WTC11 (cell line): ENCODE measurements at regions of chr12 and their contacts with region 1.

Region 1: DNA sequence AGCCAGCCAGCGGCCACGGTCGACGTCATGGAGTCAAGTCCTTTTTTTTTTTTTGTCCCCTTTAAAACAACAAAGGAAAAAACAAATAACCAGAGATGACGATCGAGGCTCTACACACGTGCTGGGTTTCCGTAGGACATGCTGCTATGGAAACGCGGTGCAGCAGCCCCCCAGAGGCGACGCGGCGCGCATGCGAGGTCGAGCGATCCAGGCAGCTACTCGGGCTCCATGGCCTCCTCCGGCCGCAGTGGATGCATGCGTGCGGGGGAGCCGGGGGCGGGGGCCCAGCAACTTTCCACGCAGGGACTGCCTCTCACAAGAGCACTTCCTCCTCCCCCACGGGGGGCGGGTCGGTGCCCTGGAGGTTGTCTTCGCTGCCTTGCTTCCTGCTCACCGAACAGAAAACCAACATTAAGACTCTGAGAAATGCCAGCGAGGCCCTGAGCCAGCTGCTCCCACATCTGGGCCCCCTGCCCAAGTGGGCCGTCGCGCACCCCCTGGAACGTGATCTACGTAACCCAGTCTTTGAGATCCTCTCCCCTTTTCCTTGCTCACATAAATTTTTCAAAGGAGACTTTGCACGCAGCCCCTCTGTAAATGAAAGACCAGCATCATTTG is 30.7 kb downstream of the P2RX4 start:
- DNase-seq: peak; percentile 50
- ATAC-seq: peak; percentile 33
- H3K4me3 Mint-ChIP-seq: no peak overlapping the region
- H3K27ac Mint-ChIP-seq: 0 out of 2 replicates have a peak overlapping the region, but pooled peaks have one; percentile 29
- H3K4me1 Mint-ChIP-seq: peaks cover 39% of the 10 kb centered on the region
- H3K27me3 Mint-ChIP-seq: no peaks in the 10 kb centered on the region
- CTCF ChIP-seq: no peak

Region 2: GRCh38 chr12:121124402-121125098 is 116.0 kb before region 1 on chr12:
- CTCF ChIA-PET with region 1: no interaction called
- POLR2A ChIA-PET with region 1: no interaction called
- DNase-seq: no peak
- ATAC-seq: peak; percentile 56
- H3K4me3 Mint-ChIP-seq: no peak overlapping the region
- H3K27ac Mint-ChIP-seq: no peak overlapping the region
- H3K4me1 Mint-ChIP-seq: peaks cover 6% of the 10 kb centered on the region
- H3K27me3 Mint-ChIP-seq: peaks cover 10% of the 10 kb centered on the region
- CTCF ChIP-seq: no peak

Region 3: DNA sequence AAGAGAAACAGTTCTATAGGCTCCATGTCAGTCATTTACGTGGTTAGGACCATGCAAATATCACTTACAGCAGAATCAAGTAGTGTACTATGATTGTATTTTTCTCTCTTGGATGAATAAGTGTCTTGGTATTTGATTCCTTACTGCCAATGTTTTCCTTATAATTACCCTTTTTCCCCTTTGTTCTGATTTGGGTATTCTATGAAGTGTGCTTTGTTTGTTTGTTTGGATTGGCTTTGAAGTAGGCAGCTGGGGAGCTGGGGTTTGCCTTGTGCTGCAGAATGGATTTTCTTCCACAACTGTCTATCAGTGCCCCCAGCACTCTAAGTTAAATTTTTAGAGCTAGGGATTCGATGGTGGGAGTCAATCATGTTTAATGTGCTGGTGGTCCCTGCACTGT is 484.3 kb after region 1 on chr12:
- CTCF ChIA-PET with region 1: no interaction called
- POLR2A ChIA-PET with region 1: interaction called, 10 read pairs
- DNase-seq: no peak
- ATAC-seq: no peak
- H3K4me3 Mint-ChIP-seq: no peak overlapping the region
- H3K27ac Mint-ChIP-seq: no peak overlapping the region
- H3K4me1 Mint-ChIP-seq: peaks cover 9% of the 10 kb centered on the region
- H3K27me3 Mint-ChIP-seq: no peaks in the 10 kb centered on the region
- CTCF ChIP-seq: no peak